Calu3 (cell line): ENCODE measurements at regions of chr15 and their contacts with region 1.

Region 1: DNA sequence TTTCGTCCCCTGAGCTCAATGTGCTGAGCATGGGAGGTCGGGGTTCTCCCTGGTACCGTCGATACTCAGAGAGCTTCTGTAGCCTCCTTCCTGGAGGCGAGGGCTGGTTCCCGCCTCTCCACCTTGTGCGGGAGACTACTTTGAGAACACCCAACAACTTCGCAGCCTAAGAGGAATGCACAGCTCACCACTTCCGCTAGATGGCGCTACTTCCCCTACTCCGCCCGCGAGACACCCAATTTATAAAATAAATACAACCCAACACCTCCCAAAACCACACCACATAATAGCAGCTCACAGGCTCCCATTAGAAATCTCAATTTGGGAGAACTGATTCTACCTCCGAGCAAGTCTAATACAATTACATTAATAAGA is 1.2 kb downstream of the RGMA start:
- DNase-seq: peak; percentile 78
- H3K4me3 Mint-ChIP-seq: peak overlapping the region; percentile 62
- H3K27ac Mint-ChIP-seq: no peak overlapping the region
- H3K4me1 Mint-ChIP-seq: peaks cover 16% of the 10 kb centered on the region
- H3K27me3 Mint-ChIP-seq: peaks cover 81% of the 10 kb centered on the region
- CTCF ChIP-seq: peak; percentile 83

Region 2: GRCh38 chr15:93030430-93031105 is 57.2 kb before region 1 on chr15:
- CTCF ChIA-PET with region 1: interaction called, 10 read pairs
- intact Hi-C with region 1: no loop called
- DNase-seq: peak; percentile 78
- H3K4me3 Mint-ChIP-seq: no peak overlapping the region
- H3K27ac Mint-ChIP-seq: peak overlapping the region; percentile 35
- H3K4me1 Mint-ChIP-seq: peaks cover 23% of the 10 kb centered on the region
- H3K27me3 Mint-ChIP-seq: no peaks in the 10 kb centered on the region
- CTCF ChIP-seq: peak; percentile 85

Region 3: DNA sequence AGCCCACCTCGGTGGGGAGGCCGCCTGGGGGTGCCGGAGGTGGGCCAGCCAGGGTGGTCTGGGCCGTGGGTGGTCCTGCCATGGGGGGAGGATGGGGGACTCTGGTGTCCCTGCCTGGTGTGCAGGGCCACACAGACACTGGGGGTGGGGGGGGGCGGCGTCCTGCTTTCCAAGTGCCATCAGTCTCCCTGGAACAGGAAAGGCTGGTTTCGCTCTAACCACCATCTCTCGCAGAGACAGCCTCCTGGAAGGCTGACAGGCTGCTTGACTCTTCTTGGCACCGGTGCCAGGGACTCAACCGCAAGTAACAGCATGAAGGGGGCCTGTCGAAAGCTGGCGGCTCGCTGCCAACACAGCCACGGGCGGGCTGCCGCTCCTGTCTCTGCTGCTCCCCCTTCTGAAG is 39.1 kb before region 1 on chr15:
- CTCF ChIA-PET with region 1: no interaction called
- intact Hi-C with region 1: no loop called
- DNase-seq: no peak
- H3K4me3 Mint-ChIP-seq: no peak overlapping the region
- H3K27ac Mint-ChIP-seq: no peak overlapping the region
- H3K4me1 Mint-ChIP-seq: no peaks in the 10 kb centered on the region
- H3K27me3 Mint-ChIP-seq: peaks cover 65% of the 10 kb centered on the region
- CTCF ChIP-seq: no peak

Region 4: GRCh38 chr15:93164409-93164808 is 76.6 kb after region 1 on chr15:
- CTCF ChIA-PET with region 1: no interaction called
- intact Hi-C with region 1: no loop called
- DNase-seq: no peak
- H3K4me3 Mint-ChIP-seq: no peak overlapping the region
- H3K27ac Mint-ChIP-seq: no peak overlapping the region
- H3K4me1 Mint-ChIP-seq: no peaks in the 10 kb centered on the region
- H3K27me3 Mint-ChIP-seq: peaks cover 91% of the 10 kb centered on the region
- CTCF ChIP-seq: no peak

Region 5: DNA sequence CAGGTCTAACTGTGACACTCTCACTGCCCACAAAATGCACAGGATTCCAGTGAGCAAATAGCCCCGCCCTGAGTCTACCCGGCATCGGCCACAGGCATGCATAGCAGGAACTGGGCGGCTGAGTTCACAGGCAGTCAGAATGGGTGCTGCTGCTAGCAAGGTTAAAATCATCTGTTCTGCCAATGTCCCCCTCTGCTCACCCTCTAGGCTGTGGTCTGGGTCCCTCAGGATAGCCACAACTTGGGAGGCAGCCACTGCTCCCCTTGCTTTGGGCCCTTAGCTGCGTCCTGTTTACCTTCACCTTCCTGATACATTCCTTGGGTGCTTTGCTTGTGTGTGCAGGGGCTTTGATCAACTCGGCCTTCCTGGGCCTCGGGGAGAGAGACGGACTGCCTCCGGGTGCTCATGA is 234.1 kb after region 1 on chr15:
- CTCF ChIA-PET with region 1: interaction called, 10 read pairs
- intact Hi-C with region 1: loop called (anchors 5 kb)
- DNase-seq: peak; percentile 80
- H3K4me3 Mint-ChIP-seq: no peak overlapping the region
- H3K27ac Mint-ChIP-seq: no peak overlapping the region
- H3K4me1 Mint-ChIP-seq: peaks cover 15% of the 10 kb centered on the region
- H3K27me3 Mint-ChIP-seq: no peaks in the 10 kb centered on the region
- CTCF ChIP-seq: no peak

Region 6: GRCh38 chr15:93617443-93617842 is 529.6 kb after region 1 on chr15:
- CTCF ChIA-PET with region 1: interaction called, 3 read pairs
- intact Hi-C with region 1: loop called (anchors 10 kb)
- DNase-seq: no peak
- H3K4me3 Mint-ChIP-seq: no peak overlapping the region
- H3K27ac Mint-ChIP-seq: no peak overlapping the region
- H3K4me1 Mint-ChIP-seq: no peaks in the 10 kb centered on the region
- H3K27me3 Mint-ChIP-seq: no peaks in the 10 kb centered on the region
- CTCF ChIP-seq: no peak

Region 7: GRCh38 chr15:94119923-94120775 is 1032.3 kb after region 1 on chr15:
- CTCF ChIA-PET with region 1: interaction called, 55 read pairs
- intact Hi-C with region 1: loop called (anchors 1 kb)
- DNase-seq: peak; percentile 69
- H3K4me3 Mint-ChIP-seq: no peak overlapping the region
- H3K27ac Mint-ChIP-seq: no peak overlapping the region
- H3K4me1 Mint-ChIP-seq: no peaks in the 10 kb centered on the region
- H3K27me3 Mint-ChIP-seq: peaks cover 37% of the 10 kb centered on the region
- CTCF ChIP-seq: peak; percentile 84